Heart right ventricle (tissue), 16 donors: ENCODE measurements at regions of chr6 and their contacts with region 1.

Region 1: GRCh38 chr6:107045826-107046613 is 18.0 kb downstream of the MTRES1 start:
- DNase-seq: no peak
- ATAC-seq: peak in 4 of 8 donors; percentile 11 to 45 (median 18)
- H3K4me3 ChIP-seq: no peak overlapping the region
- H3K27ac ChIP-seq: peak overlapping the region in 2 of 10 donors; percentile 25 to 26
- H3K4me1 ChIP-seq: peaks cover 0 to 10% (median 0%) of the 10 kb centered on the region in 9 donors
- H3K27me3 ChIP-seq: no peaks in the 10 kb centered on the region
- CTCF ChIP-seq: no peak

Region 2: DNA sequence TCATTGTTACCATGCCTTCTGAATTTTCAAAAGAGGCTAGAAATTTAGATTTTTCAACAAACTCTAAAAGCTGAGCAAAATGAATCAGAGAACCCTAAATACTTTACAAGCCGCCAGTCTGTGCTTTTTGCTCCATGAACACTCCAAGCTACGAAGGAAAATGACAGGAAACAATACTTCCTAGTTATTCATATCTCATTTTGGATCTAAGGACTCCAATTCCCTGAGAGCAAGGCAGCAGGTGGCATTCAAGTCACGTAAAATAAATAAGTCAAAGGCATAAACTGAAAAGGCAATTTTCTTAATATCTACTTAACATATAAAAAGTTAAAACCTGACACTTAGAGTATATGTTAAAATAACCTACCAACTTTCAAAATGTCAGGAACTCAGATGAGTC is 362.7 kb after region 1 on chr6:
- intact Hi-C with region 1: loop called in 1 of 10 experiments (anchors 5 kb)
- DNase-seq: no peak
- ATAC-seq: no peak
- H3K4me3 ChIP-seq: no peak overlapping the region
- H3K27ac ChIP-seq: no peak overlapping the region
- H3K4me1 ChIP-seq: peaks cover 0 to 32% (median 8%) of the 10 kb centered on the region in 9 donors
- H3K27me3 ChIP-seq: no peaks in the 10 kb centered on the region
- CTCF ChIP-seq: peak in 2 of 9 donors; percentile 16 to 28